Endothelial cell of umbilical vein (primary cell): ENCODE measurements at regions of chr5 and their contacts with region 1.

Region 1: DNA sequence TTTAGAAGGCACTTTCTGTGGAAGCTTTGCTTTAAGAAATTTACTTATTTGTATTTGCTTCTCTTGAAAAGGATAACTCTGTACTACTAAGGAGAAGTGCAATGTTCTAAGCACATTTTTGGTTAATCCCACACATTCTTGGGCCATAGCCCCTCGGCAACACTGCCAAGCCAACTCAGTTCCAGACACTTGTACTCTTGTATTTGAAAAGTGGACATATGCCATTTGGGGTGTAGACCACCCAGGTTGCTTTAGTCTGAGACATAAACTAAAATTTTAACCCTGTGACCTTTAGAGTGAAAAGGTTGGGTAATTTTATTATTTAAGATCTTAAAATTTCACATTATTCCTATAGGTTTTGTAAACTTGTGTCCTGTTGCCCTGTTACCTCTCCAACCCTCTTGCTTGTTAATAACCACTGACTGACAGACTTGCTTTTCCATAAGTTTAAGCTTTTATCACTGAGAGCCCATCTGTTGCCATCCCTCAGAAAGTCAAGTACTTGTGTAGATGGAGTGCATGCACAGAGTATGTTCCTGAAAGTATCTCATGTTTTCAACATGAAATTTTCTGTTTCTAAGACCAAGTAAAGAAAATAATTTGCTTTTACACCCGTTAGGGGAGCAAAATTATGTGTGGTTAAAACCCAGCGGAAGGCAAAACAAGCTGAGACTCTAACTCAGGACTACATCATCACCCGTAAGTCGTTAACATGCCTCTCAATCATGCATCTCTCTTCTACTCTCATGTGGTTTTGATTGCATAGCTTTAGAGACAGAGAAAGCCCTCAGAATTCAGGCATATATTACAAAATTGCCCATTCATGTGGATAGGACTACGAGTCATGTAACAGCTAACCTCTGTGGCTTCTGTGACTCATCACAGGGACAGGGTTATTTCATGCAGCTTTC is 117.3 kb downstream of the GDNF start:
- DNase-seq: peak; percentile 14
- H3K4me3 ChIP-seq: no peak overlapping the region
- H3K27ac ChIP-seq: peak overlapping the region; percentile 82
- H3K4me1 ChIP-seq: peaks cover 40% of the 10 kb centered on the region
- H3K27me3 ChIP-seq: no peaks in the 10 kb centered on the region
- CTCF ChIP-seq: no peak
- POLR2A ChIP-seq: no peak

Region 2: DNA sequence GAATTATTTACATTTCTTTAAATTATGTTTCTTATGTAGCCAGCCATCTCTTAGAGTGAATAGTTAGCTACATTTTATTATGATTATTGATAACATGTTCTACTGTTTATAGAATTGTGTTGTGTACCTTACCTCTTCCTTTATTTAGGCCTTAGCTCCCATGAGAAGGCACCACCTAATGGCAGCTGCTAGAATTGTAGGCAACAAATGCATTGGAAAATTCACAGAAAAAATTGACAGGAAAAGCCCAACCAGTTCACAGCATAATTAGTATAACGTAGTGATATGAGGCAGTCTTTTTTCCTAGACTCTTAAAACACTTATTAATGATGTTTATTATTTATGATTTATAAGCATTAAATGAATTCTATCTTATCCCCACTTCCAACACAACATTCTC is 167.6 kb before region 1 on chr5:
- CTCF ChIA-PET with region 1: interaction called, 3 read pairs
- POLR2A ChIA-PET with region 1: no interaction called
- dilution Hi-C with region 1: no loop called
- intact Hi-C with region 1: loop called (anchors 1 kb)
- DNase-seq: peak; percentile 22
- H3K4me3 ChIP-seq: no peak overlapping the region
- H3K27ac ChIP-seq: no peak overlapping the region
- H3K4me1 ChIP-seq: peaks cover 24% of the 10 kb centered on the region
- H3K27me3 ChIP-seq: no peaks in the 10 kb centered on the region
- CTCF ChIP-seq: peak; percentile 18 to 27
- POLR2A ChIP-seq: no peak

Region 3: GRCh38 chr5:37703841-37704241 is 18.6 kb before region 1 on chr5:
- CTCF ChIA-PET with region 1: interaction called, 5 read pairs
- POLR2A ChIA-PET with region 1: no interaction called
- dilution Hi-C with region 1: no loop called
- intact Hi-C with region 1: loop called (anchors 1 kb)
- DNase-seq: peak; percentile 91
- H3K4me3 ChIP-seq: peak overlapping the region in 1 of 3 experiments; percentile 33
- H3K27ac ChIP-seq: peak overlapping the region; percentile 75
- H3K4me1 ChIP-seq: peaks cover 18% of the 10 kb centered on the region
- H3K27me3 ChIP-seq: no peaks in the 10 kb centered on the region
- CTCF ChIP-seq: no peak
- POLR2A ChIP-seq: no peak

Region 4: GRCh38 chr5:37757980-37758583 is 35.6 kb after region 1 on chr5:
- CTCF ChIA-PET with region 1: interaction called, 12 read pairs
- POLR2A ChIA-PET with region 1: no interaction called
- dilution Hi-C with region 1: no loop called
- intact Hi-C with region 1: no loop called
- DNase-seq: peak; percentile 13
- H3K4me3 ChIP-seq: no peak overlapping the region
- H3K27ac ChIP-seq: no peak overlapping the region
- H3K4me1 ChIP-seq: no peaks in the 10 kb centered on the region
- H3K27me3 ChIP-seq: no peaks in the 10 kb centered on the region
- CTCF ChIP-seq: peak in 1 of 2 donors; percentile 12
- POLR2A ChIP-seq: no peak